ENCODE measurements at regions of chr2 and their contacts with region 1.

Region 1: DNA sequence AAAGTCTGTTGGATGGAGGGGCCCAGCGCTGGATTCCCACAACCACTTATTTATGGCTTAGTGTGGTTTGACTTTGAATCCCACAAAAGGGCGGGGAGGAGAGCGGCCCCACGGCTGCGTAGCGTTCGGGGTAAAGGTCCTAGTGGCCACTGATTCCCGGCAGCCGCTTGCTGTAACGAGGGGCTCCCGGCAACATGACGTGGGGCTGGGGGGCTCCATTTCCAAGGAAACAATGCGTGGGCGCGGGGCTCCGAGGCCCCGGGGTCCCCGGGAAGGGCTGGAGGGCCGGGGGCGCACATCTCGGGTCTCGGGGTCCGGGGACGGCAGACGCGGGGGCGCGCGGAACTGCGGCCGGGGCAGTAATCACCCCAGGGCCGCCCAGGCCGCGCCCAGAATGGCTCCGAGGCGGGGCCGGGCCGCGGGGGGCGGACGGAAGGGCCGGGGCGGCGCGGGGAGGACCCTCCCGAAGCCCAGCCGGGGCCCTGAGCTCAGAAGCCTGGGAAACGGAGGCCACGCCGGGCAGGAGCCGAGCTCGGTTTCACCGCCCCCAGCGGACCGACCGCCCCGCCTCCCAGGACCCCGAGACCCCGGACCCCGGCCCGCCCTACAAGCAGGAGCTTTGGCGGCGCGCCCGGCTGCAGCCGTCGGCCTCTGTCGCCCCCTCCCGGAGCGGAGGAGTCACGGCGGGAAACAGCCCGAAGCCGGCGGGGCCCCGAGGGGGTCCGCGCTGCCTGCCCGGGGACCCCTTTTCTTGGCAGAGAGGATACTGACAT is 11.9 kb upstream of the MLPH start:
- DNase-seq: peak; percentile 61 to 83 (median 80)
- H3K4me3 ChIP-seq: peak overlapping the region; percentile 40 to 83 (median 68)
- H3K27ac ChIP-seq: peak overlapping the region; percentile 51 to 73
- H3K4me1 ChIP-seq: peaks cover 0 to 34% (median 26%) of the 10 kb centered on the region in 4 experiments
- H3K27me3 ChIP-seq: peaks cover 0 to 14% (median 10%) of the 10 kb centered on the region in 5 experiments

Region 2: DNA sequence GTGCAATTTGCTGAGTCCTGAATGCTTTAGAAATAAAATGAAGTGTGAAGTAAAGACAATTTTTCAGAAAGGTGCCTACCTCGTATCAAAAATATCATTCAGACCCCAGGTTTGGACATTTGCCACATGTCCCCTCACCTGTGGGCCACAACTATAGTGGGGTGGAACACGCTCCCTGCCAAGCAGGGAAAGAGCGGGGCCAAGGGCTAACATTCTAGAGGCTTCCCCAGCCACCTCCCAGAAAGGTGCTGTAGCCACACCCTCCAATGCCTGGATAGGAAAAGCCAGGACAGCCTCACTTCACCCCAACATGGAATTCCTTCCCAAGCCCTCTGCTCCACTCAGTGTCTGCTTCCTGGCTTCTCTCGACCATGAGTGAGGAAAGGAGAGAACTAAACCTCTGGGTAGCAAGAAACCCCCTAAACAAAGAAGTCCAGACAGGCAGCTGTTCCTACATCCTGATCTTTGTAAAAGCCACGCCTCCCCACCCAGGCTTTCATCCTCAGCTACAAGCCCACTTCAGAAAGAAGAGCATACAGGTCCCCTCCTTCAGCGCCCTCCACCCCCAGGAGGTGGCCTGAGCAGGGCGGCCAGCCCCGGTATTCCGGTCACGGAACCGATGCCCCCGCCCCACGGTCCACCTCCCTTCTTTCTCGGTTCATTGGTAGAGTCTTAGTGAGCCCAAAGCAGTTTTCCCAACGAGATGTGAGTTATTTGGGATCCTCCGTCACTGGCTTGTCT is 63.3 kb before region 1 on chr2:
- CTCF ChIA-PET with region 1: interaction called, 13 read pairs
- POLR2A ChIA-PET with region 1: no interaction called
- DNase-seq: no peak
- H3K4me3 ChIP-seq: no peak overlapping the region
- H3K27ac ChIP-seq: no peak overlapping the region
- H3K4me1 ChIP-seq: no peaks in the 10 kb centered on the region
- H3K27me3 ChIP-seq: peaks cover 0 to 17% (median 0%) of the 10 kb centered on the region in 5 experiments

Region 3: DNA sequence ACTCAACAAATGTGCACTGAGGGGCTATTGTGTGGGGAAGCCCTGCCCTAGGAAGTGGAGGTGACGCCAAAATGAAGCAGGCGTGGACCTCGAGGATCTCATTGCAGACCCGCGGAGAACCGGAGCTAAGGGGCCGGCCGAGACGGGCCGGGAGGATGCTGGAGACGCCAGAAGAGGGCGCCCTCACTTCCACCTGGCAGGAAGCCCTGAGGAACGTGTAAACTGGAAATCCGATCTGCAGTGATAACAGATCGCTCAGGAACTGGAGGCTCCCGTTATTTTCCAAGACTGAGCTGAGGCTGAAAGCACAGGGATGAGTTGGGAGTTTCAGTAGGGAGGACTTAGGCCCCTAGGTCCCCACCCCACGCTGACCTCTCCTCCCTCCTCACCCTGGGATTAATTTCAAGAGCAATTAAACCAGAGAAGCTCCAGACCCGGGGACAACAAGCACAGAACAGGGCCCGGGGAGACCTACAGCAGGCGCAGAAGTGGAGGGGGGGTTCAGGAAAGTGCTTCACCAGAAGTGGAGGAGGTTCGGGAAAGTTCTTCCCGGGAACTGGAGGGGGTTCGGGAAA is 53.5 kb before region 1 on chr2:
- CTCF ChIA-PET with region 1: interaction called, 44 read pairs
- POLR2A ChIA-PET with region 1: no interaction called
- DNase-seq: peak; percentile 73 to 74 (median 74)
- H3K4me3 ChIP-seq: peak overlapping the region in 2 of 7 experiments; percentile 19 to 57
- H3K27ac ChIP-seq: no peak overlapping the region
- H3K4me1 ChIP-seq: peaks cover 0 to 8% (median 3%) of the 10 kb centered on the region in 4 experiments
- H3K27me3 ChIP-seq: peaks cover 0 to 9% (median 0%) of the 10 kb centered on the region in 5 experiments

Region 4: DNA sequence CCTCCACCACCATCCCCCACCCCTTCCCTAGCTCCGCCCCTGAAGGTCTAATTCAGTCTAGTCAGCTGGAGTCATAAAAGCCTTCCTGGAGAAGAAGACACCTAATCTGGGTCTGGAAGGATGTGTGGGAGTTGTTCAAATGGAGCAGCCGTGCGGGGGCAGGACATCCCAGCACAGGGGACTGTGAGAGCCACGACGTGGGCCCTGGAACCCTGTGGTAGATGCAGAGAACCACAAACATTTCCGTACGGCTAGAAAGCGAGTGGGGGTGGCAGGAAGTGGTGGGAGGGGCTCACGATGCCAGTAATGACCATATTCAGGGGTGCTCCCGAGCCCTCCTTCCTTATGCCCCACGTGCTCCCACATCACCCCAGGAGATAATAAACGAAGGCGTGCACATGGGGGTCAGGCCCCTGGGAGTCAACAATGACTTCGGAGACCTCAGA is 40.2 kb before region 1 on chr2:
- CTCF ChIA-PET with region 1: interaction called, 30 read pairs
- POLR2A ChIA-PET with region 1: interaction called, 3 read pairs
- DNase-seq: peak; percentile 69 to 90 (median 87)
- H3K4me3 ChIP-seq: peak overlapping the region in 5 of 7 experiments; percentile 4 to 43 (median 6)
- H3K27ac ChIP-seq: peak overlapping the region in 1 of 2 experiments; percentile 12
- H3K4me1 ChIP-seq: peaks cover 13 to 64% (median 55%) of the 10 kb centered on the region in 4 experiments
- H3K27me3 ChIP-seq: no peaks in the 10 kb centered on the region

Measured in common myeloid progenitor, CD34-positive (primary cell).